ENCODE measurements at regions of chr2 and their contacts with region 1.

Region 1: DNA sequence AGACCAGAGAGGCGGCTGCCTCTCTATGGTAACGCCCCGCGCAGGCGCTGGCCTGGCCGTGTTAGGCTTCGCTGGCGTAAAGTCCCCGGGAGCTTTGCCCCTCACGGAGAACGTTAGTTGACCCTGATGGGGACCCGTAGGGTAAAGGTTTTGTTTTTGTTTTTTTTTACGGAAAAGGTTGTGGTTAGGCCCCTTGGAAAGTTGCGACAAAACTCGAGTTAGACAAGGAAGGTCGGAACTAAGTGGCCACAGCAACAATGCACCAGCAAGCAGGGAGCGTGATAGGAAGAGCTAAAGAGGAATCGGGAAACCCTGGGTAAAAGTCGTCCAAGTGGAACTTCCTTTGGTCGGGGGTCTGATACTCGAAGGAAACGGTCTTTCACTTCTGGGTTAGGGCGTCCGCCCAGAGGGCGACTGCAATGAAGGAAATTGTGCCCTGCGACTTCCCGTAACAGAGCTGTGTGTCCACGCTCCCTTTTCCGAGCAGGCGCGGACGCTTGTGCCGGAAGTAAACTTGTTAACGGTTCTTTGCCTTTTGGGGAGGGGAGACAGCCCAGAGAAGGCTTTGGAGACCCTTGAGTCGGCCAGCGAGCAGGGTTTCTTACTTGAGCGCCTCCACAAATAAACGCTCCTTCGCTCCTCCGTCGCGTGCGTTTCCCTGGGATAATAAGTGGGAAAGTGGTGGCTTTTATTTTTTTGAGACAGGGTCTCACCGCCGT is 493 bp upstream of the CLASP1 start:
- DNase-seq: peak; percentile 97 to 98
- H3K4me3 ChIP-seq: peak overlapping the region; percentile 68 to 87 (median 76)
- H3K27ac ChIP-seq: peak overlapping the region; percentile 94 to 97 (median 96)
- H3K4me1 ChIP-seq: peaks cover 39 to 43% of the 10 kb centered on the region in 2 donors
- H3K27me3 ChIP-seq: no peaks in the 10 kb centered on the region
- CTCF ChIP-seq: no peak
- POLR2A ChIP-seq: no peak

Region 2: GRCh38 chr2:121707920-121708361 is 58.2 kb after region 1 on chr2:
- intact Hi-C with region 1: no loop called
- DNase-seq: no peak
- H3K4me3 ChIP-seq: no peak overlapping the region
- H3K27ac ChIP-seq: no peak overlapping the region
- H3K4me1 ChIP-seq: no peaks in the 10 kb centered on the region
- H3K27me3 ChIP-seq: no peaks in the 10 kb centered on the region
- CTCF ChIP-seq: no peak
- POLR2A ChIP-seq: no peak

Region 3: DNA sequence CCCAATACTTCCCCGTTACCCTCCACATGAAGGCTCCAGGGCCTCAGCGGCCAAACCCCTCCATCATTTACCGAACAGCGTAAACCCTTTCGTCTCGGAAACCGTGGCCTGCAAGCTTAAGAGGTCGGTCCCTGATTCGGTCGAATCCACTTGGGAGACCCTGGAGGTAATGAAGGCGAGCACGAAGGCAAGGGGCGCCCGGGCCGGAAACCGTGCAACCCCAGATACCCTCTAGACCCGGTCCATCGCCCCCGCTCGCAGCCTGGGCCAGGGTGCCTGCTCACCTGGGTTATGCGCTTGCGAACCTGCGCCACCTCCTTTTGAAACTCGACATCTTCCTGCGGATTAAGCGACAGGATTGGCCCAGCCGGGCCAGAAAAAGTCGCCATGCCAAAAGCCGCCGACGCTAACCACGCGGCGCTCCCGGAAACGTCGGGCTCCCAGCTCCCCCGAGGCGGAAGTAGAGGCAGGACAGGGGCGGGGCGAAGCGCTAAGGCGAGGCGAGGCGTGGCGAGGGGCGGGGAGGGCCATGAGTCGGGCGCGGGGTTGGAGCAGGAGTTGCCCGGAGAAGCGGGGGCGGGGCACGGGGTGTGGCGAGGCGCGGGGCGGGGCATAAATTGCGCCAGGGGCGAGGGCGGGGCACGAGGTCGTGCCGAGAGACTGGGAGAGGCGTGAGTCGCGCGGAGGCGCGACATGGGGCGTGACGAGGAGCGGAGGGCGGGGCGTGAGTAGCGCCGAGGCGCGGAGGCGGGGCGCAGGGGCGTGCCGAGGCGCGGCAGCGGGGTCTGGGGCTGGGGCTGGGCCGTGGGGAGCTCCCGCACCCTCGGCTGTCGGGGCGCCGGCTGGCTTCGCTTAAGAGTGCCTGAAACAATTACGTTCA is 86.9 kb after region 1 on chr2 and contains the start of gene NIFK:
- intact Hi-C with region 1: loop called (anchors 5 kb)
- DNase-seq: peak; percentile 99 to 100
- H3K4me3 ChIP-seq: peak within 1 kb of the TSS; percentile 11 to 93 (median 83)
- H3K27ac ChIP-seq: peak within 1 kb of the TSS; percentile 39 to 67 (median 66)
- H3K4me1 ChIP-seq: peaks cover 4 to 5% of the 10 kb centered on the region in 2 donors
- H3K27me3 ChIP-seq: no peaks in the 10 kb centered on the region
- CTCF ChIP-seq: no peak
- POLR2A ChIP-seq: peak in 1 of 2 donors; percentile 41
- total RNA-seq, gene NIFK: 19.1 to 72.2 (median 35.4) TPM

Measured in thyroid gland (tissue), 4 donors.